ENCODE measurements at regions of chr11 and their contacts with region 1.

Region 1: DNA sequence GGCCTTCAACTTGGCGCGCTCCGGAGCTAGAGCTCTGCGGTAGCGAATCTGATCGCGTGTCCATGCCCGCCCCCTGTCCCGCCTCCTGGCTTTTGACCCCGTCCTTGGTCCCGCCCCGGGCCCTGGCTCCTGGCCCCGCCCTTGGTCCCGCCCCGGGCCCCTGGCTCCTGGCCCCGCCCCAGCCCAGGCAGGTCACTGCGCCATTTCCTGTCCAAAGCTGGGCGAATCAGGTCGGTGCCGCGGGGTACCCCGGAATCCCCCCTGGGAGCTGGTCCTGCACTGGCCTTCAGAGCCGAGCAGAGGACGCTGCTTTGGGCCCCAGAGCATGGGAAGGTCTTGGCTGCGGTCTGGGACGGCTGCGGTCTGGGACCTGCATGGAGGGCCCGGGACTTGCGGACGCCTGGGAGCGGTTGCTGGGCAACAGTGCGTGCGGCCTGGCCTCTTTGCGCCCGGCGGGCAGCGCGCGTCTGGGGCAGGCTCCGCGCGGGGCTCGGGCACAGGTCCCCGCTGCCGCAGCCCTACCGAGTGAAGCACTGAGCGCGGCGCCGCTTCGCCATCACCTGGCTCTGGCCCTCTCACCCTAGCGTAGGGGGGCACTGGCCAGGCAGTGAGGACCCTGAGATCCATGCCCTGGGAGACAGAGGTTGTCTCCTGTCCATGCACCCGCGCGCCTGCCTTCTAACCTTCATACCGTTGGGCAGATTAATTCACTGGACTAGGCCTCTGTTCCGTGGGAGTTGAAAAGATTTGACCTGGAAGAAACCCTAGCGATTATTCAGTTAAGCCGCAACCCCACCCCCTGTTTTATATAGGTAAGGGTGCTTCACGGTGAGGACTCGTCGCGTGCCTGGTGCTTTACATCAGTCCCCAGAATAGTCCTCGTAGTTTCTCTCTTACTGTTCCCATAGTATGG is at the start of gene TTC12:
- DNase-seq: peak; percentile 95
- H3K4me3 Mint-ChIP-seq: peak within 1 kb of the TSS; percentile 80
- H3K27ac Mint-ChIP-seq: peak within 1 kb of the TSS; percentile 79
- H3K4me1 Mint-ChIP-seq: peaks cover 23% of the 10 kb centered on the region
- H3K27me3 Mint-ChIP-seq: no peaks in the 10 kb centered on the region
- total RNA-seq, gene TTC12: 4.1 to 7.4 TPM

Region 2: DNA sequence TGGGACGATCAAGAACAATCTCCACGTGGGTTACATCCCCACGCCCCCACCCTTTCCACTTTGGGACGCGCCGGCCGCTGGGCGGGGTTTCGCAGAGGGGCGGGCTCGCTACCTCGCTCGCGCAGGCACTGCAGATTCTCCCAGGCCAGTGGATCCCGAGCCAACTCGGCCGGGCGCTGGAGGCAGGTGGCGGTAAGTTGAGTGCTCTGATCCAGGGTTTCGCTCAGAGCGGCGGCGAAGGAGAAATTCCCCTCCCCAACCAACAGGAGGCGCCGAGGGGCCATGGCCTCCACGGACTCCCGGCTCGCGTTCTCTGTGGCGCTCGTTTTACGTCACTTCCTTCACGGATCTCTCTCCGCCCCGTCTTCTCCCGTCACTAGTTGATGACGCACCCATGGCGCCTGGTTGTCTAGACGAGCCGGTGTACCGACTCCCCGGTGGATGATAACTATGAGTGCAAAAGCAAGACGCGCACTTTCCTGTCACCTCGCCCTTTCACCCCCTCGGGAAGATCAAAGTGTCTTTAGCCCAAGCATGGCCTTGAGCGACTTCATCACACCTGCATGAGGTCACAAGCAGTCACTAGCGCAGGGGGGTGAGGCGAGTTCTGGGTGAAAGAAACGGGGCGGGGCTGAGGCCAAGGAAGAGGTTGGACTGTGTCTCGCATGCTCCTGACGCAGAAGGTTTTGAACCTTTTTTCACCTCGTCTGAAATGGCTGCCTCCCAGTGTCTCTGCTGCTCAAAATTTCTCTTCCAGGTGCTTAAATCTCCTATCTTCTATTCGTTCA is 1435.6 kb before region 1 on chr11 and contains the starts of genes CFAP68 and FDXACB1:
- CTCF ChIA-PET with region 1: no interaction called
- intact Hi-C with region 1: loop called (anchors 10 kb)
- DNase-seq: peak; percentile 97
- H3K4me3 Mint-ChIP-seq: peak within 1 kb of the TSS; percentile 98
- H3K27ac Mint-ChIP-seq: peak within 1 kb of the TSS; percentile 97
- H3K4me1 Mint-ChIP-seq: peaks cover 39% of the 10 kb centered on the region
- H3K27me3 Mint-ChIP-seq: no peaks in the 10 kb centered on the region
- total RNA-seq, gene CFAP68: 31.5 to 33.2 TPM
- total RNA-seq, gene FDXACB1: 3.4 to 3.8 TPM

Region 3: DNA sequence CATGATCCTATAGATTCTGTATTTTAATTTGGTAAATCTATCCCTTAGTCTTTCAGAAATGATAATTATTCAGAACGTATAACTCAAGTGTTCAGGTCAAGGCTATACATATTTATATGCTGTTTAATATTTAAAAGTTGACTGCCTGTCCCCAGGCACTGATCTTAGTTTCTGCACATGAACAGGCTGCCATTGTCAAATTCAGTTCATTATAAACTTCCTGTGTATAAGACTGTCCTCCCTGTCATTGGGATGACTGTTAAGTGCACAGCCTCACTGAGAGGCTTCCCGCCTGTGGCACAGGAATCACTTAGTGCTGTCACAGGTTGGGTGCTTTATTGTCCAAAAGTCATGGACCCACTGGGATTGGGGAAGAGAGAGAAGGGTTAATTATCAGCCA is 92.4 kb before region 1 on chr11:
- CTCF ChIA-PET with region 1: no interaction called
- intact Hi-C with region 1: no loop called
- DNase-seq: no peak
- H3K4me3 Mint-ChIP-seq: no peak overlapping the region
- H3K27ac Mint-ChIP-seq: no peak overlapping the region
- H3K4me1 Mint-ChIP-seq: no peaks in the 10 kb centered on the region
- H3K27me3 Mint-ChIP-seq: peaks cover 20% of the 10 kb centered on the region

Region 4: GRCh38 chr11:113289431-113290187 is 25.0 kb before region 1 on chr11:
- CTCF ChIA-PET with region 1: interaction called, 10 read pairs
- intact Hi-C with region 1: no loop called
- DNase-seq: peak; percentile 82
- H3K4me3 Mint-ChIP-seq: no peak overlapping the region
- H3K27ac Mint-ChIP-seq: no peak overlapping the region
- H3K4me1 Mint-ChIP-seq: no peaks in the 10 kb centered on the region
- H3K27me3 Mint-ChIP-seq: peaks cover 7% of the 10 kb centered on the region

Region 5: DNA sequence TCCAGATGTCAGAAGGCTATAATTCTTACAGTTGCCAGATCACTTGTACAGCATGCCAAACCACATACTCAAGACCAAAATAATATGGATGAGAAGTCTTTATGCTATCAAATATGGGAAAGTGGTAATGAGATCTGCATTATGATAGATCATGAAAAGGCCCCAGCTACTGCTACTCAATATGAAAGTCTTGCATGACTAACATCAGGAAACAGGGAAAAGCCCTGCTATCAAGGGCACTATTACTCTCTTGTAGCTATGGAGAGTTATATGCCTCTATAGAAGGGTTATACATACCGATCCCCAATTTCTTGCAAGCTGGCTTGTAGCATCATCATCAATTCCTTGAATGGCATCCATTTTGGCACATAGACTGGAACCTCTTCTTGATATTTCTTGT is 421.7 kb after region 1 on chr11:
- CTCF ChIA-PET with region 1: no interaction called
- intact Hi-C with region 1: loop called (anchors 2 kb)
- DNase-seq: no peak
- H3K4me3 Mint-ChIP-seq: no peak overlapping the region
- H3K27ac Mint-ChIP-seq: no peak overlapping the region
- H3K4me1 Mint-ChIP-seq: peaks cover 12% of the 10 kb centered on the region
- H3K27me3 Mint-ChIP-seq: no peaks in the 10 kb centered on the region

Region 6: DNA sequence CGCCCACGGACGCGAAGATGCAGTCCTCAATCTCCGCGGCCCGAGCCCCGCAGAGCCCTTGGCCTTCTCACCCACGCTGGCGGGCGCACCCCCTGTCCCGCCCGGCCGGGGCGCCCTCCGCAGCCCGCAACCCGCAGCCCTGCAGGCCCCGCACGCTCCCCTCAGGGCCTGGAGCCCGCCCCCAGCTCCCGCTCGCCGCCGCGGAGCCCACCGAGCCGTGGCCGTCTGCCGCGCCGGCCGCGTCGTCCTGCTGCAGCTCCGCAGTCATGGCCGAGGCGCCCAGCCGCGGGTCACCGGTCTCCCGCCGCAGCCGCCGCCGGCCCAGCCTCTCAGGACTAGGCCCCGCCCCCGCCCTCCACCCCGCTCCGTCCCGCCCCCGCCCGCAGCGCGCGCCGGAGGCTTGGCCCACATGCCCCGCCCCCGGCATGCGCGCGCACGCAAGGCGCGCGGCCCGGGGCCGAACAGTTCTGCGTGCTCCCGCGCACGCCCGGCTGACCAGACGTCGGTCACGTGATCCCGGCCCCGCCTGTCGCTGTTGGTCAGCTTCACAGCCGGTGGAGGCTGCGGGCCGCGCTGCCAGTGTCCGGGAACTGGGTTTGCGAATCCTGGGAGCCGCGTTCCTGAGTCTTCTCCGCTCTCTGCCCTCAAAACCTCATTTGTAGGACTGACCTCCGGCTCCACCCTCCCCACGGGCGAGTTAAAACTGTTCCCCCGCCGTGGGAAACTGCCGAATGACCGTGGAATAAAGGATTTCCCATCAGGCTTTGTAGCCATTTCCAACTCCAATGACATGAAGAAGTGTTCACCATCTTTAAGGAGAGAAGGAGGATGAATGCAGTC is 560.8 kb after region 1 on chr11 and contains the start of gene USP28:
- CTCF ChIA-PET with region 1: no interaction called
- intact Hi-C with region 1: loop called (anchors 2 kb)
- DNase-seq: peak; percentile 71
- H3K4me3 Mint-ChIP-seq: peak within 1 kb of the TSS; percentile 95
- H3K27ac Mint-ChIP-seq: peak within 1 kb of the TSS; percentile 87
- H3K4me1 Mint-ChIP-seq: peaks cover 34% of the 10 kb centered on the region
- H3K27me3 Mint-ChIP-seq: no peaks in the 10 kb centered on the region
- total RNA-seq, gene USP28: 26.1 to 26.8 TPM

Measured in activated naive CD4-positive, alpha-beta T cell treated with anti-CD3 and anti-CD28 coated beads for 36 hours (primary cell).